ENCODE measurements at regions of chr16 and their contacts with region 1.

Region 1: GRCh38 chr16:82924075-82924854 is 297.5 kb downstream of the CDH13 start:
- DNase-seq: peak; percentile 28 to 66
- ATAC-seq: peak; percentile 64 to 79 (median 72)
- H3K4me3 ChIP-seq: no peak overlapping the region
- H3K4me3 Mint-ChIP-seq: peak overlapping the region; percentile 75
- H3K27ac ChIP-seq: no peak overlapping the region
- H3K27ac Mint-ChIP-seq: peak overlapping the region; percentile 45 to 76
- H3K4me1 ChIP-seq: peaks cover 27% of the 10 kb centered on the region
- H3K4me1 Mint-ChIP-seq: peaks cover 40 to 46% of the 10 kb centered on the region in 2 donors
- H3K27me3 ChIP-seq: no peaks in the 10 kb centered on the region
- H3K27me3 Mint-ChIP-seq: peaks cover 0 to 3% of the 10 kb centered on the region in 2 donors
- CTCF ChIP-seq: no peak

Region 2: GRCh38 chr16:83137326-83137770 is 213.1 kb after region 1 on chr16:
- intact Hi-C with region 1: loop called (anchors 10 kb)
- DNase-seq: peak; percentile 43 to 64
- ATAC-seq: peak; percentile 82 to 90 (median 85)
- H3K4me3 ChIP-seq: peak overlapping the region; percentile 6
- H3K4me3 Mint-ChIP-seq: peak overlapping the region; percentile 89
- H3K27ac ChIP-seq: peak overlapping the region; percentile 48
- H3K27ac Mint-ChIP-seq: peak overlapping the region; percentile 86 to 89
- H3K4me1 ChIP-seq: peaks cover 19% of the 10 kb centered on the region
- H3K4me1 Mint-ChIP-seq: peaks cover 19 to 20% of the 10 kb centered on the region in 2 donors
- H3K27me3 ChIP-seq: no peaks in the 10 kb centered on the region
- H3K27me3 Mint-ChIP-seq: peaks cover 0 to 15% of the 10 kb centered on the region in 2 donors
- CTCF ChIP-seq: no peak